Naive thymus-derived CD4-positive, alpha-beta T cell (primary cell): ENCODE measurements at regions of chr13 and their contacts with region 1.

Region 1: DNA sequence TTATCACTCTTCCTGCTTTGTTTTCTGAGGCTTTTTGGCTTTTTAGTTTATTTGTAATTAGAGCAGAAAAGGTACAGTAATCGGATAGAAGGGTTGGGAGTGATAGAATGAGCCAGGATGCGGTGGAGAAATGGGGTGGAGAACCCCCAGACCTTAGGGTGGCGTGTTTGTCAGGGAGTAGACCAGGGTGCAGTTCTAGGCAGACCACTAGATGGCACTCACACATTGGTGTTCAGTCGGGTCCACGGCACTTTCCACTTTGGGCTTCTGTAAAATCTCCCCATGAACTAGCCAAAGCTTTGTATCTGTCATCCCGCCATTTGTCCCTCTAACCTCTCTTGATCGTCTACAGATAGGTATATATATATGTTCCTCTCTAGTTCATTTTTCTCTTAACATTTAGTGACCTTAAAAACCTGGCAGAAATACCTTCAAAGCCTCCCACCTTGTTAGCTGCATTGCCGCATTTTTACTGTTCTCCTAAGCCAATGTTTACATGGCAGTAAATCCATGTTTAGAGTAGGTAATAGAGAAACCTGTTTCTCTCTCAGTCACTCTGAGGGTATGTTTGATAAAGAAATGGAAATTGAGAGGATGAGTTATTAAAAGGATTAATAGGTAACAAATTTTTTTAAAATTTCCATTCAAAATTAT is 154.9 kb downstream of the TM9SF2 start:
- DNase-seq: peak; percentile 58 to 84 (median 80)
- ATAC-seq: peak; percentile 89
- H3K4me3 ChIP-seq: peak overlapping the region; percentile 47
- H3K4me3 Mint-ChIP-seq: peak overlapping the region; percentile 73 to 90 (median 81)
- H3K27ac ChIP-seq: peak overlapping the region; percentile 82
- H3K27ac Mint-ChIP-seq: peak overlapping the region; percentile 47 to 98 (median 92)
- H3K4me1 ChIP-seq: peaks cover 39 to 41% of the 10 kb centered on the region in 2 donors
- H3K4me1 Mint-ChIP-seq: peaks cover 14 to 54% (median 45%) of the 10 kb centered on the region in 7 donors
- H3K27me3 ChIP-seq: no peaks in the 10 kb centered on the region
- H3K27me3 Mint-ChIP-seq: peaks cover 0 to 27% (median 0%) of the 10 kb centered on the region in 5 donors

Region 2: DNA sequence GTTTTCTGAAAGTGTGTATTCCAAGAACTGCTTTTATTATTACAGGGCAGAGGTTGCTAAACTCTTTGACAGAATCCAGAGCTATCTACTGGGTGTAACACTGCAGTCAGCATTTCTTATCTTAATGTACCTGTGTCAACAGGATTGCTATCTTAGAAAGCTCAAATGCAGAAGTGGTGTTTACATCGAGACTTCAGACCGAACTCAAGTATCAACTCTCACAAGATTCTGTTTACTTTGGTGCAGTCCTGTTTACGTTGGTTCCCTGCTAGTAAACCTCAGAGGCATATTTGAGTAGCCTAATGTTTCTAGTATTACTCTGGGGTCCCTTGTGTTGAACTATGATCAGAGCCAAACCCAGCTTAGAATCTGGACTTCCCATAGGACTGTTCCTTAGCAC is 924.3 kb before region 1 on chr13:
- CTCF ChIA-PET with region 1: no interaction called
- POLR2A ChIA-PET with region 1: no interaction called
- intact Hi-C with region 1: no loop called
- DNase-seq: no peak
- ATAC-seq: no peak
- H3K4me3 ChIP-seq: no peak overlapping the region
- H3K4me3 Mint-ChIP-seq: no peak overlapping the region
- H3K27ac ChIP-seq: no peak overlapping the region
- H3K27ac Mint-ChIP-seq: no peak overlapping the region
- H3K4me1 ChIP-seq: no peaks in the 10 kb centered on the region
- H3K4me1 Mint-ChIP-seq: peaks cover 0 to 6% (median 5%) of the 10 kb centered on the region in 7 donors
- H3K27me3 ChIP-seq: no peaks in the 10 kb centered on the region
- H3K27me3 Mint-ChIP-seq: peaks cover 0 to 20% (median 5%) of the 10 kb centered on the region in 5 donors

Region 3: GRCh38 chr13:99442273-99442895 is 213.8 kb before region 1 on chr13:
- CTCF ChIA-PET with region 1: interaction called, 4 read pairs
- POLR2A ChIA-PET with region 1: interaction called, 4 read pairs
- intact Hi-C with region 1: loop called (anchors 1 kb)
- DNase-seq: peak in 7 of 9 donors; percentile 50 to 75 (median 68)
- ATAC-seq: peak; percentile 95
- H3K4me3 ChIP-seq: no peak overlapping the region
- H3K4me3 Mint-ChIP-seq: no peak overlapping the region
- H3K27ac ChIP-seq: no peak overlapping the region
- H3K27ac Mint-ChIP-seq: peak overlapping the region in 1 of 9 donors; percentile 47
- H3K4me1 ChIP-seq: peaks cover 0 to 3% of the 10 kb centered on the region in 2 donors
- H3K4me1 Mint-ChIP-seq: peaks cover 2 to 17% (median 7%) of the 10 kb centered on the region in 7 donors
- H3K27me3 ChIP-seq: no peaks in the 10 kb centered on the region
- H3K27me3 Mint-ChIP-seq: peaks cover 0 to 30% (median 0%) of the 10 kb centered on the region in 5 donors

Region 4: DNA sequence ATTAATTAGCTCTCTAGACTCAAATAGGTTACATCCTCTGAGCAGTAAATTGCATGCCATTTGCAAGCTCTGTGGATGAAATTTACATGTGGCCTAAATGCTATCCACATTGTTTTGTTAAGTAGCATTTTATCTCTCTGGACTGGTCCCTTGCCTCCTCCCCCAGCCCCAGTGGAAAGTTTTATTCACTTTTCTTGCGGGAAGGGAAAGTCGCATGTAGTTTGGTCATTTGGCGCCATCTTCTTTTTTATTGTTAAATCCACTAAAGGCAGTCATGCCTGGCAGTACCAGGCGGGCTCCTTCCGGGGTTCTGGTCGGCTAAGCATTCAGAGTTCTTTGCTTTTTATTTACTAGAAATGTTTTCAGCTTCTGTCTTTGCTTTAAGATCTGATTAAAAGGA is 33.7 kb after region 1 on chr13:
- CTCF ChIA-PET with region 1: no interaction called
- POLR2A ChIA-PET with region 1: no interaction called
- intact Hi-C with region 1: no loop called
- DNase-seq: no peak
- ATAC-seq: no peak
- H3K4me3 ChIP-seq: no peak overlapping the region
- H3K4me3 Mint-ChIP-seq: no peak overlapping the region
- H3K27ac ChIP-seq: no peak overlapping the region
- H3K27ac Mint-ChIP-seq: no peak overlapping the region
- H3K4me1 ChIP-seq: no peaks in the 10 kb centered on the region
- H3K4me1 Mint-ChIP-seq: peaks cover 0 to 6% (median 0%) of the 10 kb centered on the region in 7 donors
- H3K27me3 ChIP-seq: no peaks in the 10 kb centered on the region
- H3K27me3 Mint-ChIP-seq: peaks cover 0 to 13% (median 0%) of the 10 kb centered on the region in 5 donors

Region 5: GRCh38 chr13:99821741-99822140 is 165.5 kb after region 1 on chr13:
- CTCF ChIA-PET with region 1: interaction called, 18 read pairs
- POLR2A ChIA-PET with region 1: interaction called, 26 read pairs
- intact Hi-C with region 1: loop called in 1 of 2 experiments (anchors 1 kb)
- DNase-seq: no peak
- ATAC-seq: no peak
- H3K4me3 ChIP-seq: no peak overlapping the region
- H3K4me3 Mint-ChIP-seq: no peak overlapping the region
- H3K27ac ChIP-seq: no peak overlapping the region
- H3K27ac Mint-ChIP-seq: no peak overlapping the region
- H3K4me1 ChIP-seq: peaks cover 12 to 14% of the 10 kb centered on the region in 2 donors
- H3K4me1 Mint-ChIP-seq: peaks cover 11 to 22% (median 19%) of the 10 kb centered on the region in 7 donors
- H3K27me3 ChIP-seq: no peaks in the 10 kb centered on the region
- H3K27me3 Mint-ChIP-seq: peaks cover 0 to 11% (median 0%) of the 10 kb centered on the region in 5 donors

Region 6: DNA sequence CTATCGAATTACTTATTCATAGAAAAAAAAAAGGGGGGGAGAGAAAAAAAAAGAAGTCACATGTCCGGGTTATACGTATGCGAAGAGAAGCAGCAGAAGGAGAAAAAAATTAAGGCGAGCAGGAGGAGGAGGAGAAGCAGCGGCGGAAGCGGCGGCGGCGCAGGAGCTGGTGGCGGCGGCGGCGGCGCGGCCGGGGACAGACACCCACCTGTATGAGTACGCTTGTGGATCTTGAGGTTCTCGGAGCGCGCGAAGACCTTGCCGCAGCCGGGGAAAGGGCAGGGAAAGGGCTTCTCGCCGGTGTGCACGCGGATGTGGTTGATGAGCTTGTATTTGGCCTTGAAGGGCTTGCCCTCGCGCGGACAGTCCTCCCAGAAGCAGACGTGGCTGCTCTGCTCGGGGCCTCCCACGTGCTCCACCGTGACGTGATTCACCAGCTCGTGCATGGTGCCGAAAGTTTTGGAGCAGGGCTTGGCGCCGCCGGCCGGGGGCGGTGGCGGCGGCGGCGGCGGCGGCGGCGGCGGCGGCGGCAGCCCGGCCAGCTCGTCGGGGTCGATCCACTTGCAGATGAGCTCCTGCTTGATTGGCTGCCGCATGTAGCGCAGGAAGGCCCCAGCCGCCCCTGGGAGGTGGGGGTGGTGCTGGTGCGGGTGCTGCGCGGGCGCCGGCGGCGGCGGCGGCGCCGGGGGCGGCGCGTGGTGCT is 313.9 kb after region 1 on chr13:
- CTCF ChIA-PET with region 1: interaction called, 3 read pairs
- POLR2A ChIA-PET with region 1: interaction called, 3 read pairs
- intact Hi-C with region 1: loop called (anchors 2 to 5 kb)
- DNase-seq: peak in 1 of 9 donors; percentile 49
- ATAC-seq: peak; percentile 48
- H3K4me3 ChIP-seq: no peak overlapping the region
- H3K4me3 Mint-ChIP-seq: peak overlapping the region; percentile 82 to 95 (median 86)
- H3K27ac ChIP-seq: no peak overlapping the region
- H3K27ac Mint-ChIP-seq: peak overlapping the region in 8 of 9 donors; percentile 53 to 91 (median 86)
- H3K4me1 ChIP-seq: peaks cover 0 to 10% of the 10 kb centered on the region in 2 donors
- H3K4me1 Mint-ChIP-seq: peaks cover 18 to 34% (median 25%) of the 10 kb centered on the region in 7 donors
- H3K27me3 ChIP-seq: peaks cover 47 to 74% of the 10 kb centered on the region in 2 donors
- H3K27me3 Mint-ChIP-seq: peaks cover 68 to 79% (median 70%) of the 10 kb centered on the region in 5 donors

Region 7: DNA sequence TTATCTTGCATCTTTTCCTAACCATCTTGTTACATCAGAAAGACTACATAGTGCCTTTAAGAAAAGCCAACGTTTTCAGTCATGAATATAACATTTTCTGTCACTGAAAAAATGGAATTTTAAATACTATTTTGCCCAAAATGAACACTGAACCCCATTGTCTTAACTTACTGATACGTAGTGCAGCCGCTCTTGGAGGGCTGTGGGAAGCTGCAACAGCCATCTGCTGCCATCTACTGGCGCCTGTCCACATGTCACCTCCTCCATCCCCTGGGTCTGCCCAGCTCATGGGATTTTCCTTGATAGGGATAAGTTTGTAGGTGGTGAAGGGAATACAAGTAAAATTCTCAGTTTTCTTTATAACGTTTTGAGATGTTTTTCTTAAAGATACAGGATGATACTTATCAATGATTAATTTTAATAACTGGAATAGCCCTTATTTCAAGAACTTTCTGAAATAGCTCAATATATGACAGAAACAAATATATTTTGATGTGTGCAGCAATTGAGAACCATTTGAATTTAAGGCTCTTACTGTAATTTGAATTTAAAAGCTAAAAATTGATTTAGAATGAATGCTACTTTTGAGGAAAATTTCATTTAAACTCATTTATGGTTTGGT is 858.7 kb after region 1 on chr13:
- CTCF ChIA-PET with region 1: interaction called, 60 read pairs
- POLR2A ChIA-PET with region 1: interaction called, 13 read pairs
- intact Hi-C with region 1: loop called (anchors 1 kb)
- DNase-seq: peak; percentile 37 to 74 (median 63)
- ATAC-seq: peak; percentile 94
- H3K4me3 ChIP-seq: no peak overlapping the region
- H3K4me3 Mint-ChIP-seq: no peak overlapping the region
- H3K27ac ChIP-seq: no peak overlapping the region
- H3K27ac Mint-ChIP-seq: peak overlapping the region in 1 of 9 donors; percentile 80
- H3K4me1 ChIP-seq: peaks cover 0 to 7% of the 10 kb centered on the region in 2 donors
- H3K4me1 Mint-ChIP-seq: peaks cover 0 to 30% (median 6%) of the 10 kb centered on the region in 7 donors
- H3K27me3 ChIP-seq: no peaks in the 10 kb centered on the region
- H3K27me3 Mint-ChIP-seq: peaks cover 0 to 4% (median 0%) of the 10 kb centered on the region in 5 donors

Region 8: GRCh38 chr13:101098873-101099272 is 1442.7 kb after region 1 on chr13:
- CTCF ChIA-PET with region 1: interaction called, 4 read pairs
- POLR2A ChIA-PET with region 1: no interaction called
- intact Hi-C with region 1: loop called in 1 of 2 experiments (anchors 1 kb)
- DNase-seq: no peak
- ATAC-seq: no peak
- H3K4me3 ChIP-seq: no peak overlapping the region
- H3K4me3 Mint-ChIP-seq: no peak overlapping the region
- H3K27ac ChIP-seq: no peak overlapping the region
- H3K27ac Mint-ChIP-seq: no peak overlapping the region
- H3K4me1 ChIP-seq: no peaks in the 10 kb centered on the region
- H3K4me1 Mint-ChIP-seq: peaks cover 0 to 3% (median 0%) of the 10 kb centered on the region in 7 donors
- H3K27me3 ChIP-seq: no peaks in the 10 kb centered on the region
- H3K27me3 Mint-ChIP-seq: peaks cover 18 to 30% (median 20%) of the 10 kb centered on the region in 5 donors